Activated T-helper 1 cell treated with anti-CD3 and anti-CD28 coated beads, Interleukin-12 subunit alpha, Interleukin-12 subunit beta, Interleukin-2, Interleukin-4 antibody, amounts not matched to agents 30 ng/mL and 10 ng/mL and 1 ng/mL, durations not matched to agents 14 hours and 24 hours and 36 hours (primary cell): ENCODE measurements at regions of chr2 and their contacts with region 1.

Region 1: DNA sequence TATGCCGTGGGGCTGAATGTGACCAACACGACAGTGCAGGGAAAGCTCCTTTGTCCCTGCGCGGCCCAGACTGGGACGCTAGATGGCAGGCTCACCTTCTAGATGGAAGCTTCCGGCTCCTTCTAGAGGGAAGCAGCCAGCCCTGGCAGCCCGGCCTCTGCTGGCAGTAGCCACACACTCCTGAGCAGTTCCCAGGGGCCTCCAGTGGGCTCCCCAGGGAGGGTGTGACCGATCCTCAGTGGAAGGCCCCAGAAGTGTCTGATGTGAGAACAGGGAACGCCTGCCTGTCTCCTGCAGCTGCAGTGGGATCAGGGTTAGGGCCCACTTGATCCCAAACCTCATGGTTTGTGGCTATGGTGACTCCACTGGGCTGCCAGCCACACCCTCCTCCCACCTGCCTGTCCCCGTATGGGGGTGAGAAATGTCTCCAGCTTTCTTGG is 48.5 kb upstream of the LRPPRC start:
- DNase-seq: peak; percentile 70
- H3K4me3 Mint-ChIP-seq: no peak overlapping the region
- H3K27ac Mint-ChIP-seq: no peak overlapping the region
- H3K4me1 Mint-ChIP-seq: no peaks in the 10 kb centered on the region
- H3K27me3 Mint-ChIP-seq: peaks cover 10% of the 10 kb centered on the region

Region 2: GRCh38 chr2:43877782-43878464 is 166.4 kb before region 1 on chr2:
- intact Hi-C with region 1: loop called (anchors 1 kb)
- DNase-seq: peak; percentile 51
- H3K4me3 Mint-ChIP-seq: no peak overlapping the region
- H3K27ac Mint-ChIP-seq: no peak overlapping the region
- H3K4me1 Mint-ChIP-seq: peaks cover 7% of the 10 kb centered on the region
- H3K27me3 Mint-ChIP-seq: peaks cover under 1% of the 10 kb centered on the region

Region 3: GRCh38 chr2:44033947-44034346 is 10.4 kb before region 1 on chr2:
- intact Hi-C with region 1: no loop called
- DNase-seq: no peak
- H3K4me3 Mint-ChIP-seq: no peak overlapping the region
- H3K27ac Mint-ChIP-seq: no peak overlapping the region
- H3K4me1 Mint-ChIP-seq: no peaks in the 10 kb centered on the region
- H3K27me3 Mint-ChIP-seq: peaks cover 2% of the 10 kb centered on the region

Region 4: DNA sequence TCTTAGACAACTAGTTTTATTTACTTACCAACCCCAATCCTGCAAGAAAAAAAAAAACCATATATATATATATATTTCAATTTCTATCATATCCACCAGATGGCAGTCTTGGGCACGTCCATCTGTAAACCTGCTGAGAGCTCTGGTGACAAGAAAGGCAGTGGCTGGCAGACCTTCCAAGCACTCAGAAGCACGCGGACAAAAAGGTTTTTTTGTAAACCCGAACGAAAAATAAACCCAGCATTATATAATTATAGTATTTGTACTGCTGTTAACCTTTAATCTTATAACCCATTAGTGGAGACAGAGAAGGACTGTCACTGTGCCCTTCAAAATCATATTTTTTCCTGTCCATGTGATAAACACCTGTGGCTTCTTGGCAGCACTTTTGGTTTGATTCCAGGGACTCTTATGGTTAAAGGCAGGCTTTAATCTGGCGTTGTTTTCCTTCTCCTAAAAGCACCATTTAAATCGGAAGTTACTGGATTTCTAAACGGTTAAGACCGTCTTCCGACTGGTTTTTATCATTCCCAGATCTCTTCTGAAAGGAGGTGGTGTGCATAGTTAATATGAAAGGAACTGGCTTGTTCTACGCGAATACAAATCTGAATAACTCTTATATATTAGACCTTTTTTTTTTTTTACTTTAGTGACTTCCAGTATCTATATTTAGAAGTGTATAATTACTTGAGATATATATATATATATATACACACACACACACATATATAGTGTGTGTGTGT is 200.0 kb after region 1 on chr2:
- intact Hi-C with region 1: loop called (anchors 1 kb)
- DNase-seq: peak; percentile 27
- H3K4me3 Mint-ChIP-seq: peak overlapping the region; percentile 55
- H3K27ac Mint-ChIP-seq: no peak overlapping the region
- H3K4me1 Mint-ChIP-seq: peaks cover 9% of the 10 kb centered on the region
- H3K27me3 Mint-ChIP-seq: peaks cover 12% of the 10 kb centered on the region

Region 5: GRCh38 chr2:44295607-44296359 is 251.5 kb after region 1 on chr2:
- intact Hi-C with region 1: loop called (anchors 5 kb)
- DNase-seq: no peak
- H3K4me3 Mint-ChIP-seq: no peak overlapping the region
- H3K27ac Mint-ChIP-seq: no peak overlapping the region
- H3K4me1 Mint-ChIP-seq: no peaks in the 10 kb centered on the region
- H3K27me3 Mint-ChIP-seq: no peaks in the 10 kb centered on the region

Region 6: DNA sequence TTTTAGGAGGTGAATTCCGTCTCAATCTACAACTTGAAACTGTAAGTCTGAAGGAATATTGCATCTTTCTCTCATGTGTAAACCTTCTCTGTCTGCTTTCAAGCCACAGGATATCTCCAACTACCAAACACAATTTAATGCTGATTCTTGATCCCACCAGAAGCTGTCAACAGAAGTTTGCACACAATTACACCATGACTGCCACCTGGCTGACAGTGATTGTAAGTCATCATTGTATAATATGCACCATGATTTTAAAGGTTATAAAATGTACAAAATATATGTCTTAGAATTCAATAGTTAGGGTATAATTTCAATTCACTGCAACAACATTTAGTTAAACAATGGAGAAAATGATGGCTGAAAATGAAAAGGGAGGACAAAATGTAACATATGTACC is 298.6 kb after region 1 on chr2:
- intact Hi-C with region 1: loop called (anchors 10 kb)
- DNase-seq: no peak
- H3K4me3 Mint-ChIP-seq: no peak overlapping the region
- H3K27ac Mint-ChIP-seq: no peak overlapping the region
- H3K4me1 Mint-ChIP-seq: no peaks in the 10 kb centered on the region
- H3K27me3 Mint-ChIP-seq: no peaks in the 10 kb centered on the region

Region 7: DNA sequence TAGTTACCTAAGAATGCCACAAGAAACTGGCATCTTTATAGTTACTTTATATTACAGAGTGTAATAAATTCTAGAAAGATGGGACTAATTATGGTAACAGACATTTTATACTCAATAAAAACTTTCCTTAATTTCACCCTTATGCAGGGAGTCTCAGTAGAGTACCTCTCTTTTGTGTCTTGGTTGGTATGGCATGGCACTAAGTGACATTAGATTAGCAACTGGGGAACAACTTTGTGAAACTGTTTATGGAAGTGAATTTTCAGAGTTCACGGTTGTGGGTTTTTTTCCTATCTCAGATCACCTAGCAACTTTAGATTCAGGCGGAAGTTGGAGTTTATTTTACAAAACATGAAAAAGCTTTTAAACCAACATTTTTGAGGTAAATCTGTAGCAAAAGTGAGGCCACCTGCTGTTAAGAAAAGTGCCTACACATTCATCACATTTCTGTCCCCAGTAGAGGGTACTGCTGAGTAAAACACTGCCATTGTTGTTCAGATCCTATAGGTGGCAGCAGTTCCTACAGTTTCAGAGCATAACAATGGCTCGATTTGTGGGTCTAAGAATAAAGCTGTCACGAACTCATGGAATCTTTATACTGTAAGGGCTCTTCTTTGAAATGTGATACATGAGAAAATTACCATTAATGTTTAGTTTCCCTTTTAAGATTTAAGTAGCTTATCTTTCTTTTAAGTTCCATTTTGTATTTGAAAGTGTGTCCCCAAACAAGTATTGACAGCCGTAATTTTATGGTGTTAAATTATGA is 435.0 kb after region 1 on chr2:
- intact Hi-C with region 1: loop called (anchors 1 kb)
- DNase-seq: peak; percentile 24
- H3K4me3 Mint-ChIP-seq: no peak overlapping the region
- H3K27ac Mint-ChIP-seq: no peak overlapping the region
- H3K4me1 Mint-ChIP-seq: no peaks in the 10 kb centered on the region
- H3K27me3 Mint-ChIP-seq: no peaks in the 10 kb centered on the region

Region 8: GRCh38 chr2:44602446-44602845 is 558.1 kb after region 1 on chr2:
- intact Hi-C with region 1: no loop called
- DNase-seq: no peak
- H3K4me3 Mint-ChIP-seq: no peak overlapping the region
- H3K27ac Mint-ChIP-seq: no peak overlapping the region
- H3K4me1 Mint-ChIP-seq: no peaks in the 10 kb centered on the region
- H3K27me3 Mint-ChIP-seq: no peaks in the 10 kb centered on the region